ENCODE measurements at regions of chr22 and their contacts with region 1.

Region 1: GRCh38 chr22:30444632-30445437 is 19.3 kb downstream of the MTFP1 start:
- DNase-seq: peak; percentile 76
- H3K4me3 ChIP-seq: peak overlapping the region; percentile 29
- H3K27ac ChIP-seq: peak overlapping the region; percentile 3
- H3K4me1 ChIP-seq: peaks cover 31% of the 10 kb centered on the region
- CTCF ChIP-seq: peak; percentile 89

Region 2: GRCh38 chr22:30408414-30409104 is 36.3 kb before region 1 on chr22:
- CTCF ChIA-PET with region 1: no interaction called
- POLR2A ChIA-PET with region 1: no interaction called
- intact Hi-C with region 1: no loop called
- DNase-seq: no peak
- H3K4me3 ChIP-seq: no peak overlapping the region
- H3K27ac ChIP-seq: no peak overlapping the region
- H3K4me1 ChIP-seq: no peaks in the 10 kb centered on the region
- CTCF ChIP-seq: no peak

Region 3: DNA sequence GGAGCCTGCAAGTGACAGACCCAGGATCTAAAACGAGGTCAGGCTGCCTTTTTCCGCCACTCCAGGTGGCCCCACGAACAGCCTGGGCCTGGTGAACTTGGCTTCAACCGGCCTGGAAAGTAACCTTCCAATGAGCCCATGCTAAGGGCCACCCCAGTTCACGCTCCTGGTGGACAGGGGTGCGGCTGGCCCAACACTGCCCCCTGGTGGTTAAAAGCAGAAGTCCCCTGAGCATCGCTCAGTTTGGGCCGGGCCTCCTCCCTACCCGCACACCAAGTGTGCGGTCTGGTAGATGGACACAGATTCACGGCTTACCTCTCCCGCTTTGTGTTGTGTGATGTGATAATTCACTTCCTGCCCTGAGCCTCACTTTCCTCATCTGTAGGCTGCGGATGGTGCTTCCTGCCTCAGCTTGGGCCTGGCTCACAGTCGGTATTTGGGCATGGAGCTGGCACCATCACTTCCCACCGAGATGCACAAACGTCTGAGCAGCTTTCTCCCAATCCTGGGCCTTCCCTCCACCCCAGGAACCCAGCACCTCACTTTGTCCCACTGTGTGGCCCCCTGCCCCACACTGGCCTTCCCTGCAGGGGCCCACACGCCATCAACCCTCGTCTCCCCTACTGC is 40.6 kb after region 1 on chr22:
- CTCF ChIA-PET with region 1: no interaction called
- POLR2A ChIA-PET with region 1: no interaction called
- intact Hi-C with region 1: loop called (anchors 2 kb)
- DNase-seq: peak; percentile 59
- H3K4me3 ChIP-seq: no peak overlapping the region
- H3K27ac ChIP-seq: no peak overlapping the region
- H3K4me1 ChIP-seq: no peaks in the 10 kb centered on the region
- CTCF ChIP-seq: peak; percentile 89